Sigmoid colon (tissue), 7 donors: ENCODE measurements at regions of chr18 and their contacts with region 1.

Region 1: DNA sequence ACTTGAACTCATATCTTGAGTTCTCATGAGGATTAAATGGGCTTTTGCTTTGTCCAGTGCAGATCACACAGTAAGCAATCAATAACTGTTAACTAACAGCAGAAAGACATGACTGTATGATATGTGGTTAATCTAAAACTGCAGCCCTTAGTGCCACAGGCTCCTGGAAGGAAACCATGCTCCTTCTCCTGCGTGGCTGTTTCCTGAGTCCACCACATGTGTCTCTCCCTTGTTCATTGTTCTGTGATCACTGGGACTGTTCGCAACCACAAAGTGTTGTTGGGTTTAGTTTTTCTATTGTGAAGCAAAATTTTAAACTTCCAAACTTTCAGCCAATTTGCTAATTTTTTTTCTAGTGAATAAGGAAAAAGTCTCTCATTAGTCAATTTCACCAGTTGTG is 130.9 kb upstream of the PTPRM start:
- DNase-seq: no peak
- H3K4me3 ChIP-seq: no peak overlapping the region
- H3K27ac ChIP-seq: no peak overlapping the region
- H3K4me1 ChIP-seq: no peaks in the 10 kb centered on the region
- H3K27me3 ChIP-seq: no peaks in the 10 kb centered on the region
- CTCF ChIP-seq: no peak
- EP300 ChIP-seq: no peak
- POLR2A ChIP-seq: no peak

Region 2: DNA sequence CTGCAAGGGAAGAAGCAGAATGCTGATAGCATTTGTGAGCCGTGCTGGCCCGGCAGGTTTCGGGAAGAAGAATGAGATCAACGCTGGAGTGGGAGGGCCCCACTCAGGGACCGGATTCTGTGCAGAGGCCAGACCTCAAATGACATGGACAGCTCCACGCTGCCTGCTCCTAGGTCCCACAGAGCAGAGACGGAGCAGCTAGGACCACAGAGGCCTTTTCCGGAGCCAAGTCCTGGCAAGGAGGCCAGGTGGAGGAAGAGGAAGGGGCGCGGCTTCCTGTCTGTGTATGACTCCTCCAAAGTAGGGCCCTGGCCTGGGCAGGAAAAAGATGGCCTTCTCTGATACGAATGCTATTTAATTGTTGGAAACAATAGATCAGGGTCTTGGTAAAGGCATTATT is 65.4 kb before region 1 on chr18:
- intact Hi-C with region 1: loop called (anchors 10 kb)
- DNase-seq: peak; percentile 69
- H3K4me3 ChIP-seq: peak overlapping the region in 1 of 4 donors; percentile 2
- H3K27ac ChIP-seq: peak overlapping the region; percentile 57 to 80 (median 72)
- H3K4me1 ChIP-seq: peaks cover 0 to 19% (median 15%) of the 10 kb centered on the region in 4 donors
- H3K27me3 ChIP-seq: no peaks in the 10 kb centered on the region
- CTCF ChIP-seq: no peak
- EP300 ChIP-seq: no peak
- POLR2A ChIP-seq: no peak